ENCODE measurements at regions of chr3 and their contacts with region 1.

Region 1: DNA sequence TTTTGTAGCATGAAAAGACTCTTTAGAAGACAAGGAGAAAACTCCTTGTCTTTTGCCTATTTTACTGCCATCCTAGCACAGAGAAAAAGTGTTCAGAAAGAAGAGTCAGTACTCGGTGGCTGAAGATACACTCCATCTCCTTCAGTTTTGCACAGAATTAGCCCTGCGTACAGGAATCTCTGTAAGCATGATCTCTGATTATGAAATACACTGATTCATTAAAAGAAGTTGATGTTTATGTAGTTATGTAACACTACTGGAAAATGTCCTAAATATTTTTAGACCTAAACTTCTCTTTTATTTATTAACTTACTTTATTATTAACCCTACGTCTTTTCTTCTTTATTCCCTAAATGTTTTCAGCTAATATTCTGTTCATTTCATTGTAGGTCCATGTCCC is 138.4 kb downstream of the LEKR1 start:
- DNase-seq: no peak
- H3K4me3 ChIP-seq: no peak overlapping the region
- H3K27ac ChIP-seq: no peak overlapping the region
- H3K4me1 ChIP-seq: no peaks in the 10 kb centered on the region
- H3K27me3 ChIP-seq: no peaks in the 10 kb centered on the region
- CTCF ChIP-seq: no peak
- POLR2A ChIP-seq: no peak

Region 2: GRCh38 chr3:156776031-156776430 is 188.5 kb before region 1 on chr3:
- intact Hi-C with region 1: loop called (anchors 5 kb)
- DNase-seq: no peak
- H3K4me3 ChIP-seq: no peak overlapping the region
- H3K27ac ChIP-seq: peak overlapping the region; percentile 33 to 56
- H3K4me1 ChIP-seq: no peaks in the 10 kb centered on the region
- H3K27me3 ChIP-seq: no peaks in the 10 kb centered on the region
- CTCF ChIP-seq: no peak
- POLR2A ChIP-seq: no peak

Region 3: GRCh38 chr3:157662171-157662570 is 697.6 kb after region 1 on chr3:
- intact Hi-C with region 1: no loop called
- DNase-seq: no peak
- H3K4me3 ChIP-seq: no peak overlapping the region
- H3K27ac ChIP-seq: no peak overlapping the region
- H3K4me1 ChIP-seq: no peaks in the 10 kb centered on the region
- H3K27me3 ChIP-seq: no peaks in the 10 kb centered on the region
- CTCF ChIP-seq: no peak
- POLR2A ChIP-seq: no peak